Heart left ventricle (tissue), 16 donors: ENCODE measurements at regions of chr9 and their contacts with region 1.

Region 1: GRCh38 chr9:18632632-18633403 is 158.9 kb downstream of the ADAMTSL1 start:
- DNase-seq: peak in 4 of 5 donors; percentile 23 to 46 (median 36)
- ATAC-seq: peak; percentile 58 to 97 (median 88)
- H3K4me3 ChIP-seq: no peak overlapping the region
- H3K27ac ChIP-seq: peak overlapping the region; percentile 34 to 76 (median 62)
- H3K4me1 ChIP-seq: peaks cover 0 to 24% (median 9%) of the 10 kb centered on the region in 12 donors
- H3K27me3 ChIP-seq: no peaks in the 10 kb centered on the region
- CTCF ChIP-seq: no peak
- POLR2A ChIP-seq: no peak

Region 2: GRCh38 chr9:18543406-18544192 is 89.2 kb before region 1 on chr9:
- intact Hi-C with region 1: no loop called
- DNase-seq: no peak
- ATAC-seq: no peak
- H3K4me3 ChIP-seq: no peak overlapping the region
- H3K27ac ChIP-seq: peak overlapping the region in 2 of 12 donors; percentile 9 to 30
- H3K4me1 ChIP-seq: peaks cover 0 to 12% (median 2%) of the 10 kb centered on the region in 12 donors
- H3K27me3 ChIP-seq: no peaks in the 10 kb centered on the region
- CTCF ChIP-seq: no peak
- POLR2A ChIP-seq: no peak

Region 3: GRCh38 chr9:18689921-18690320 is 57.1 kb after region 1 on chr9:
- intact Hi-C with region 1: loop called in 1 of 10 experiments (anchors 10 kb)
- DNase-seq: no peak
- ATAC-seq: no peak
- H3K4me3 ChIP-seq: no peak overlapping the region
- H3K27ac ChIP-seq: no peak overlapping the region
- H3K4me1 ChIP-seq: peaks cover 0 to 21% (median 0%) of the 10 kb centered on the region in 12 donors
- H3K27me3 ChIP-seq: no peaks in the 10 kb centered on the region
- CTCF ChIP-seq: no peak
- POLR2A ChIP-seq: no peak

Region 4: GRCh38 chr9:18791074-18791473 is 158.3 kb after region 1 on chr9:
- intact Hi-C with region 1: loop called in 2 of 10 experiments (anchors 10 kb)
- DNase-seq: no peak
- ATAC-seq: no peak
- H3K4me3 ChIP-seq: no peak overlapping the region
- H3K27ac ChIP-seq: no peak overlapping the region
- H3K4me1 ChIP-seq: peaks cover 0 to 39% (median 20%) of the 10 kb centered on the region in 12 donors
- H3K27me3 ChIP-seq: no peaks in the 10 kb centered on the region
- CTCF ChIP-seq: no peak
- POLR2A ChIP-seq: no peak